OCI-LY7 (cell line): ENCODE measurements at regions of chr6 and their contacts with region 1.

Region 1: DNA sequence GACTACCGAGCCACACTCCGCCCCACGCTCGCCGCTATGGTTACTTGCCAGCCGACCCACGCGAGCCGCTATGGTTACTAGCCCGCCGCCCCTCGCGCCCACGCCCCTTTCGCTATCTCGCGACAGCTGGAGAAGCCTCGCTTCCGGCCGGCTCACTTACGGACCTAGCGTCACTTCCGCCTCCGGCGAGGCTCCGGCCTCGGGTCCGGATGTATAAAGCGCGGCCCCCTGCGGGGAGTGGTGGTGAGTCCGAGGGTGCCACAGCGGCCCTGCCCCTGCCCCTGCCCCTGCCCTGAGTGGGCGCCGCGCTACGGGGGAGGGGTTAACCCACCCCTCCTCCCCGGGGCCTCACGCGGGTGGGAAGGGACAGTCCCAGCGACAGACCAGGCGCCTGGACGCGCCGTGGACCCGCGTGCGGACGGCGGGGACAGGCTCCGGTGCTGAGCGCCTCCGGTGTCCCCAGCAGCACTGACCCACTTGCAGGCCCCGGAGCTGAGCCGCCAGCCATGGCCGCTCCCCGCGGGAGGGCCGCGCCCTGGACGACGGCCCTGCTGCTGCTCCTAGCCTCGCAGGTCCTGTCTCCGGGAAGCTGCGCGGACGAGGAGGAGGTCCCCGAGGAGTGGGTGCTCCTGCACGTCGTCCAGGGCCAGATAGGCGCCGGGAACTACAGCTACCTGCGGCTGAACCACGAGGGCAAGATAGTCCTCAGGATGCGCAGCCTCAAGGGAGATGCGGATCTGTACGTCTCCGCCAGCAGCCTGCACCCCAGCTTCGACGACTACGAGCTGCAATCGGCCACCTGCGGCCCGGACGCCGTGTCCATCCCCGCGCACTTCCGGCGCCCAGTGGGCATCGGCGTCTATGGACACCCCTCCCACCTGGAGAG is at the starts of genes C6orf120 and WDR27:
- DNase-seq: peak; percentile 98
- H3K4me3 ChIP-seq: peak within 1 kb of the TSS; percentile 90
- H3K27ac ChIP-seq: peak within 1 kb of the TSS; percentile 63
- H3K4me1 ChIP-seq: peaks cover 50% of the 10 kb centered on the region
- CTCF ChIP-seq: 0 out of 2 replicates have a peak, but pooled peaks have one; percentile 24
- total RNA-seq, gene C6orf120: 30.3 and 31.0 TPM in 2 replicates
- total RNA-seq, gene WDR27: 69.5 and 77.2 TPM in 2 replicates

Region 2: DNA sequence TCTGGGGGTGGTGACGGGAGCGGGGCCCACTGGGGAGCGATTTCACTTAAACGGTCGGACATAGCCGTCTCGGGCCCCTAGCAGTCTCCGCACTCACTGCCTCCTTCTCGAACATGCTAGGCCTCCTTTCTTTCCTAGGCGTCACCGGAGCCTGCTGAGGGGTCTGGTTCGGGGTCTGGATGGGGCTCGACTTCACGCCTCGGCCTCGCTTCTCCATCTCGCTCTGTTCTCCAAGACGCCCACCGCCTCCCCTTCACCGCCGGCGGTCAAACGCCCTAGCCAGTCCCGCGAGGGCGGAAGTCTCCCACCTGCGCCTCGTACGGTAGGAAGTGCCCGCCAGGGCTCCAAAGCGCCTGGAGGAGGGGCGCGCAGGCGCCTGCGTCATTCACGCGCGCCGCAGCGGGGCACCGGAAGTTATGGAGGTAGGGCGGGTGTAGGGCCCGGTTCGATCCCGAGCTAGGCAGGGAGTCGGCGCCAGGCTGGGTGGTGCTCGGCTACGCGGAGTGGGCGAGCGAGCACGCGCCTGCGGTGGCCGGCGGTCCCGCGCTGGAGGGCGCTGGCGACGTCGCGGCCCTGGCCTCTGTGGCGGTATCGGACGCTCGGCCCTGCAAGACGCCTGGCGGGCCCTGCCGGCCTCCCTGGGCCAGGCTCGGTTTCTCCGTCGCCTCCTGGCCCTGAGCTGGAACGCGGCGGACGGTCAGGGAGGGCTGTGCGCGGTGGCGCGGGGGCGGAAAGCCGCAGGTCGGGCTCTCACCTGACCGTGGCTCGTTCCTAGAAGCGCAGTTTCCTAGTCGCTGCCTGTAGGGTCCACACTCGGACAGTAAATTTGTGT is 49.3 kb after region 1 on chr6 and contains the starts of genes DYNLT2 and ERMARD:
- CTCF ChIA-PET with region 1: no interaction called
- POLR2A ChIA-PET with region 1: interaction called, 7 read pairs
- intact Hi-C with region 1: loop called (anchors 1 kb)
- DNase-seq: peak; percentile 95
- H3K4me3 ChIP-seq: peak within 1 kb of the TSS; percentile 81
- H3K27ac ChIP-seq: peak within 1 kb of the TSS; percentile 61
- H3K4me1 ChIP-seq: peaks cover 22% of the 10 kb centered on the region
- CTCF ChIP-seq: 0 out of 2 replicates have a peak, but pooled peaks have one; percentile 23
- total RNA-seq, gene DYNLT2: 7.7 and 10.9 TPM in 2 replicates
- total RNA-seq, gene ERMARD: 16.5 and 23.2 TPM in 2 replicates